Thyroid gland (tissue), 4 donors: ENCODE measurements at regions of chr22 and their contacts with region 1.

Region 1: GRCh38 chr22:40922484-40923303 is 28.5 kb upstream of the RBX1 start:
- DNase-seq: no peak
- H3K4me3 ChIP-seq: no peak overlapping the region
- H3K27ac ChIP-seq: no peak overlapping the region
- H3K4me1 ChIP-seq: no peaks in the 10 kb centered on the region
- H3K27me3 ChIP-seq: no peaks in the 10 kb centered on the region
- CTCF ChIP-seq: peak; percentile 64 to 82 (median 71)
- POLR2A ChIP-seq: no peak

Region 2: GRCh38 chr22:40679964-40680818 is 242.5 kb before region 1 on chr22:
- intact Hi-C with region 1: no loop called
- DNase-seq: no peak
- H3K4me3 ChIP-seq: no peak overlapping the region
- H3K27ac ChIP-seq: no peak overlapping the region
- H3K4me1 ChIP-seq: peaks cover 0 to 13% of the 10 kb centered on the region in 2 donors
- H3K27me3 ChIP-seq: no peaks in the 10 kb centered on the region
- CTCF ChIP-seq: no peak
- POLR2A ChIP-seq: no peak

Region 3: DNA sequence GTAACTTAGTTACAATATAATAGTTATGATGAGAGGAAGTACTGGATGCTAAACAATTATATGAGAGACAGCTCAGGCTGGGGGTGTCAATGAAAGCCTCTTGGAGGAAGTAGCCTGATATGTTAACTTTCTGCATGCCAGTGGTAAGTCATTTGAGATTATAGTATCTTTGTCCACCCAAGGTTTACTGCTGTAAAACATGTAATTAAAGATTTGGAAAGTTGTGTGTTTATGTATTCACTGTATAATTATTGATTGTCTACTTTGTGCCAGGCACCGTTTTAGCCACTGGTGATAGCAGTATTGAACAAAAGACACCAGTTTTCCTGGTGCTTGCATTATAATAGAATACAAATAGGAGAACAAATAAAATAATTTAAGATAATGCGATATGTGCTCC is 60.2 kb before region 1 on chr22:
- intact Hi-C with region 1: no loop called
- DNase-seq: no peak
- H3K4me3 ChIP-seq: no peak overlapping the region
- H3K27ac ChIP-seq: no peak overlapping the region
- H3K4me1 ChIP-seq: peaks cover 6 to 8% of the 10 kb centered on the region in 2 donors
- H3K27me3 ChIP-seq: no peaks in the 10 kb centered on the region
- CTCF ChIP-seq: no peak
- POLR2A ChIP-seq: no peak

Region 4: DNA sequence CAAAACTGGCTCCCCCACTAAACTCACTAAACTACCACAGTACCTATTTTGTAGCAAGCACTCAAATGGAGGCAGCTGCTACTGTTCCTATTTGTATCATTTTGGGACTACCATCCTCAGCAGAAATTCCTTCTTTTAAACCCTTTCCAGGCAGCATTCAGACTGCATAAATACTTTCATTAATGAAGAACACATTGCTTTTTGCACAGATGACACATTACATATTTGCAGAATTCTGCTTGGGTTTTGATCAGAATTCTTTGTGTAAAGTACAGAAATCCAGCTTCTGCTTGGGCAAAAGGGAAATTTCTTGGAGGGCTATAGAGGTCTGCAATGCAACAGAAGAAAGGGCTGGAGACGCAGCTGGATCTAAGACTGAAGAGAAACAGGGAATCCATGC is 52.7 kb after region 1 on chr22:
- intact Hi-C with region 1: no loop called
- DNase-seq: no peak
- H3K4me3 ChIP-seq: no peak overlapping the region
- H3K27ac ChIP-seq: no peak overlapping the region
- H3K4me1 ChIP-seq: no peaks in the 10 kb centered on the region
- H3K27me3 ChIP-seq: no peaks in the 10 kb centered on the region
- CTCF ChIP-seq: no peak
- POLR2A ChIP-seq: no peak

Region 5: GRCh38 chr22:41237707-41238569 is 315.2 kb after region 1 on chr22:
- intact Hi-C with region 1: loop called (anchors 10 kb)
- DNase-seq: peak; percentile 87 to 89
- H3K4me3 ChIP-seq: peak overlapping the region in 2 of 3 donors; percentile 14 to 25
- H3K27ac ChIP-seq: peak overlapping the region in 2 of 3 donors; percentile 32 to 44
- H3K4me1 ChIP-seq: peaks cover 12 to 19% of the 10 kb centered on the region in 2 donors
- H3K27me3 ChIP-seq: no peaks in the 10 kb centered on the region
- CTCF ChIP-seq: peak in 5 of 6 experiments; percentile 69 to 87 (median 82)
- POLR2A ChIP-seq: peak in 1 of 2 donors; percentile 35